Sciatic nerve (tissue), 2 donors: ENCODE measurements at regions of chr3 and their contacts with region 1.

Region 1: GRCh38 chr3:168249550-168250414 is 154.1 kb upstream of the GOLIM4 start:
- DNase-seq: peak; percentile 72
- ATAC-seq: peak; percentile 83

Region 2: GRCh38 chr3:168213920-168214319 is 35.9 kb before region 1 on chr3:
- intact Hi-C with region 1: no loop called
- DNase-seq: no peak
- ATAC-seq: no peak

Region 3: GRCh38 chr3:168239287-168239686 is 10.5 kb before region 1 on chr3:
- intact Hi-C with region 1: loop called (anchors 1 kb)
- DNase-seq: no peak
- ATAC-seq: no peak